Activated B cell treated with CpG ODN at 0.5 μM for 24 hours (primary cell): ENCODE measurements at regions of chr15 and their contacts with region 1.

Region 1: DNA sequence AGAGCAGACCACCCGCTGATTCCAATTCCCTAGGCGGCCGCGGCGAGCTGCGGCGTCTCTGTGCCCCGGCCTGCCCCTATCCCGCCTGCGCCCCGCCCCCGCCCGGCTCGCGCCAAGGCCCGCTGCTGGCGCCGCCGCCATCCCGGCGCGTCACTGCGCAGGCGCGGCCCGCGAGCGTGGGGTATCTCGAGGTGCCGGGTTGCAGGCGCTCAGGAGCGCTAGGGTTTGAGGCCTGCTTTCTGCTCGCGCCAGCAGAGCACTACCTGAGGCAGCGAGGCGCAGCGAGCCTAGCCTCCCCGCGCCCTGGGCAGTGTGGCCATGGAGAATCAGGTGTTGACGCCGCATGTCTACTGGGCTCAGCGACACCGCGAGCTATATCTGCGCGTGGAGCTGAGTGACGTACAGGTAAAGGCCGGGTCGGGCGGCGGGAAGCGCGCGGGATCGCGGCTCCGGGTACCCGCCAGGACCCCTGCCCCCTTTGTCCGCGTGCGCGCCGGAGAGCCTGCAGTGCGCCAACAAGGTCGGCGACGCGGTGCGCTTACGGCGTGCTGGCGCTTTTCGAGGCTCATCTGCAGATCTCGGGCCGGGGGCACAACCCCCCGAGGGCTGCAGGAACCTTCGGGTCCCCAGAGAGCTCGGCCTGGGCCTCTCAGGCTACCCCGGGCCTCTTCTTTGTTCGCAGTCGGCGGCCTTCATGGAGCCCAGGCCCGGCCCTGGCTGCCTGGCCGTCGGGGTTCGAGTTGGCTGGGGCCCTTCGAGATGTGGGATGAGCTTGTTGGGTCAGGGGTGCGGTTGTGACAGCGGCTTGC is at the start of gene HACD3:
- DNase-seq: peak; percentile 92
- ATAC-seq: peak; percentile 98
- H3K4me3 Mint-ChIP-seq: peak within 1 kb of the TSS; percentile 87
- H3K27ac Mint-ChIP-seq: peak within 1 kb of the TSS; percentile 74
- H3K4me1 Mint-ChIP-seq: peaks cover 21% of the 10 kb centered on the region
- H3K27me3 Mint-ChIP-seq: no peaks in the 10 kb centered on the region
- CTCF ChIP-seq: no peak
- total RNA-seq, gene HACD3: 11.5 and 12.1 TPM in 2 replicates

Region 2: GRCh38 chr15:64809649-64810496 is 720.6 kb before region 1 on chr15:
- CTCF ChIA-PET with region 1: no interaction called
- POLR2A ChIA-PET with region 1: no interaction called
- intact Hi-C with region 1: no loop called
- DNase-seq: peak; percentile 61
- ATAC-seq: peak; percentile 43
- H3K4me3 Mint-ChIP-seq: no peak overlapping the region
- H3K27ac Mint-ChIP-seq: no peak overlapping the region
- H3K4me1 Mint-ChIP-seq: peaks cover 25% of the 10 kb centered on the region
- H3K27me3 Mint-ChIP-seq: no peaks in the 10 kb centered on the region
- CTCF ChIP-seq: peak; percentile 90

Region 3: GRCh38 chr15:65516997-65517865 is 13.3 kb before region 1 on chr15 and contains the start of gene DPP8:
- CTCF ChIA-PET with region 1: interaction called, 10 read pairs
- POLR2A ChIA-PET with region 1: interaction called, 9 read pairs
- intact Hi-C with region 1: no loop called
- DNase-seq: peak; percentile 91
- ATAC-seq: peak; percentile 94
- H3K4me3 Mint-ChIP-seq: peak within 1 kb of the TSS; percentile 96
- H3K27ac Mint-ChIP-seq: peak within 1 kb of the TSS; percentile 89
- H3K4me1 Mint-ChIP-seq: peaks cover 37% of the 10 kb centered on the region
- H3K27me3 Mint-ChIP-seq: no peaks in the 10 kb centered on the region
- CTCF ChIP-seq: no peak
- total RNA-seq, gene DPP8: 43.0 and 52.2 TPM in 2 replicates